B cell (primary cell): ENCODE measurements at regions of chr3 and their contacts with region 1.

Region 1: GRCh38 chr3:160449636-160450598 is at the start of gene TRIM59:
- DNase-seq: peak; percentile 97
- ATAC-seq: peak; percentile 97
- H3K4me3 ChIP-seq: peak within 1 kb of the TSS; percentile 84 to 99 (median 95)
- H3K4me3 Mint-ChIP-seq: peak within 1 kb of the TSS; percentile 95
- H3K27ac ChIP-seq: peak within 1 kb of the TSS; percentile 70 to 84
- H3K27ac Mint-ChIP-seq: peak within 1 kb of the TSS; percentile 91
- H3K4me1 ChIP-seq: peaks cover 16 to 18% of the 10 kb centered on the region in 2 donors
- H3K4me1 Mint-ChIP-seq: peaks cover 30% of the 10 kb centered on the region
- H3K27me3 ChIP-seq: peaks cover 0 to 3% (median 0%) of the 10 kb centered on the region in 4 experiments
- H3K27me3 Mint-ChIP-seq: no peaks in the 10 kb centered on the region
- CTCF ChIP-seq: no peak
- total RNA-seq, gene TRIM59: 17.4 and 22.0 TPM in 2 replicates

Region 2: GRCh38 chr3:160012108-160012507 is 437.8 kb before region 1 on chr3:
- CTCF ChIA-PET with region 1: no interaction called
- POLR2A ChIA-PET with region 1: no interaction called
- intact Hi-C with region 1: loop called (anchors 1 kb)
- DNase-seq: peak; percentile 72
- ATAC-seq: peak; percentile 88
- H3K4me3 ChIP-seq: peak overlapping the region in 2 of 5 experiments; percentile 6 to 16
- H3K4me3 Mint-ChIP-seq: peak overlapping the region; percentile 33
- H3K27ac ChIP-seq: peak overlapping the region; percentile 81 to 90
- H3K27ac Mint-ChIP-seq: peak overlapping the region; percentile 75
- H3K4me1 ChIP-seq: peaks cover 25 to 33% of the 10 kb centered on the region in 2 donors
- H3K4me1 Mint-ChIP-seq: peaks cover 34% of the 10 kb centered on the region
- H3K27me3 ChIP-seq: no peaks in the 10 kb centered on the region
- H3K27me3 Mint-ChIP-seq: no peaks in the 10 kb centered on the region
- CTCF ChIP-seq: no peak

Region 3: GRCh38 chr3:160413613-160414248 is 36.2 kb before region 1 on chr3:
- CTCF ChIA-PET with region 1: interaction called, 16 read pairs
- POLR2A ChIA-PET with region 1: no interaction called
- intact Hi-C with region 1: no loop called
- DNase-seq: peak; percentile 78
- ATAC-seq: peak; percentile 80
- H3K4me3 ChIP-seq: no peak overlapping the region
- H3K4me3 Mint-ChIP-seq: no peak overlapping the region
- H3K27ac ChIP-seq: no peak overlapping the region
- H3K27ac Mint-ChIP-seq: no peak overlapping the region
- H3K4me1 ChIP-seq: no peaks in the 10 kb centered on the region
- H3K4me1 Mint-ChIP-seq: no peaks in the 10 kb centered on the region
- H3K27me3 ChIP-seq: no peaks in the 10 kb centered on the region
- H3K27me3 Mint-ChIP-seq: no peaks in the 10 kb centered on the region
- CTCF ChIP-seq: peak; percentile 98

Region 4: DNA sequence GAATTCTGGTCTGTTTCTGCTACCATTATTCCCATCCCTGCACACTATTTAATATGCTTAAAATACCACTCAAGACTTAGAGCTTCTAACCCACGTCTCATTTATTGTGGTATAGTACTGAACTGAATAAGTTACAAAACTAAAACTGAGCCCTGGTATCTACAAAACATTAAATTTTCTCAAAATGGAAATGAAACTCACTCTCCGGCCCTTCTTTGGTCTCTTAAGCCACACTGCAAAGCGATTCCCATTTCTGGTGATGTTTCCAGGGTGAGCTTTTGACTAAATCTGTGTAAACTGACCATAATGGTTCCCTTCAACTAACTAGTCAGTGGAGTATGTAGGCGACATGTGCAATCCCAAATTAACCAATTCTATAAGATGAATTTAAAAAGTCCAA is 96.8 kb after region 1 on chr3:
- CTCF ChIA-PET with region 1: no interaction called
- POLR2A ChIA-PET with region 1: interaction called, 11 read pairs
- intact Hi-C with region 1: no loop called
- DNase-seq: no peak
- ATAC-seq: no peak
- H3K4me3 ChIP-seq: no peak overlapping the region
- H3K4me3 Mint-ChIP-seq: no peak overlapping the region
- H3K27ac ChIP-seq: no peak overlapping the region
- H3K27ac Mint-ChIP-seq: no peak overlapping the region
- H3K4me1 ChIP-seq: peaks cover 4 to 13% of the 10 kb centered on the region in 2 donors
- H3K4me1 Mint-ChIP-seq: peaks cover 68% of the 10 kb centered on the region
- H3K27me3 ChIP-seq: no peaks in the 10 kb centered on the region
- H3K27me3 Mint-ChIP-seq: no peaks in the 10 kb centered on the region
- CTCF ChIP-seq: no peak

Region 5: GRCh38 chr3:160754855-160755747 is 305.2 kb after region 1 on chr3:
- CTCF ChIA-PET with region 1: no interaction called
- POLR2A ChIA-PET with region 1: interaction called, 4 read pairs
- intact Hi-C with region 1: loop called (anchors 5 kb)
- DNase-seq: peak; percentile 93
- ATAC-seq: peak; percentile 81
- H3K4me3 ChIP-seq: peak overlapping the region; percentile 68 to 86 (median 81)
- H3K4me3 Mint-ChIP-seq: peak overlapping the region; percentile 98
- H3K27ac ChIP-seq: peak overlapping the region; percentile 72 to 82
- H3K27ac Mint-ChIP-seq: peak overlapping the region; percentile 95
- H3K4me1 ChIP-seq: peaks cover 25% of the 10 kb centered on the region in 2 donors
- H3K4me1 Mint-ChIP-seq: peaks cover 31% of the 10 kb centered on the region
- H3K27me3 ChIP-seq: peaks cover 0 to 11% (median 4%) of the 10 kb centered on the region in 4 experiments
- H3K27me3 Mint-ChIP-seq: peaks cover 21% of the 10 kb centered on the region
- CTCF ChIP-seq: no peak